ENCODE measurements at regions of chr11 and their contacts with region 1.

Region 1: DNA sequence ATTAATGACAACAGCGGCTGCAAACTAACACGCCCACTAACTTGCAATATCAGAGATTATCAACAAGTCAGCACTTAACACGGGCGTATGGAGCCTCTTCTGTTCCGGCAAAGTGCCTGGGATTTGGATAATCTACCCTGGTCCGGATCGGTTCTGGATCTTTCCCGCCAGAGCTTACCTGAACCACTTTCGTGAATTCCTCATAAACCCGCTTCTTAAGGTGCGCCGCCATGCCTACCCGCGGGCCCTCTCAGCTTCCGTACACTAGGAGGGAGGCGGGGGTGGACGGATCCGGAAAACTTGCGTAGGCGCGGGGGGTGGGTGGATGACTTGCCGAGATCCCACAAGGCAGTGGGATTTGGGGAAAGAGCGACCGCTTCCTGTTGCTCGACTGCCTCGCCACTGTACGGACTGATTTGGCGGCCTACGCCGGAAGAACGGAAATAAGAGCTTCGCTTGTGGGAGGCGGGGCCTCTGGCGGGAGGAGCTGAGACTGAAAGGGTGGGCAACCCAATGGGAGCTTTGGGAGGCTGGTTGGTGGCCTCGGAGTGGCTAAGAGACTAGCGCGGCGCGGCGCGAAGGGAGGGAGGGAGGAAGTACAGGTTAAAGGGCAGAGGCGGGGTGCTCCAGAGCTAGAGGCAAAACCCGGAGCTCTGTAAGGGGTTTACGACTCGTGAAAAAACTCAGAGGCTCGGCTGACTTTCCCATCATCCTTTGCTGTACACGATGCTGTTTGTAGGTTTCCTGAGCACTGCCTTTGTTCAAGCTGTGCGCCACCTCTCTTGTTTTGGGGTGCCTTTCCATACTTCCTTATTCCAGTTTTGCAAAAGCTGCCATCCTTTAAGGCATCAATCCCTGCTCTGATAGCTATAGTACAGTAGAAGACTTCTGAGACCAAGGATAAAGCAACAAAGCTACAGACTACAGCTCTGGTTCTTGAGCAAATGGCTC is at the start of gene INTS4:
- DNase-seq: peak; percentile 98 to 100 (median 99)
- H3K4me3 ChIP-seq: peak within 1 kb of the TSS; percentile 50 to 96 (median 82)
- H3K27ac ChIP-seq: peak within 1 kb of the TSS; percentile 78 to 99 (median 94)
- H3K27me3 ChIP-seq: no peaks in the 10 kb centered on the region
- CTCF ChIP-seq: peak in 42 of 56 donors; percentile 6 to 65 (median 32)
- total RNA-seq, gene INTS4: 21.1 to 52.1 (median 34.9) TPM

Region 2: GRCh38 chr11:77637345-77638165 is 357.1 kb before region 1 on chr11 and contains the start of gene CLNS1A:
- intact Hi-C with region 1: loop called in 1 of 2 experiments (anchors 5 kb)
- DNase-seq: peak; percentile 89 to 95 (median 94)
- H3K4me3 ChIP-seq: peak within 1 kb of the TSS; percentile 61 to 100 (median 93)
- H3K27ac ChIP-seq: peak within 1 kb of the TSS in 57 of 59 donors; percentile 38 to 94 (median 82)
- H3K27me3 ChIP-seq: no peaks in the 10 kb centered on the region
- CTCF ChIP-seq: peak in 31 of 56 donors; percentile 5 to 54 (median 28)
- total RNA-seq, gene CLNS1A: 82.2 to 173 (median 107) TPM

Region 3: DNA sequence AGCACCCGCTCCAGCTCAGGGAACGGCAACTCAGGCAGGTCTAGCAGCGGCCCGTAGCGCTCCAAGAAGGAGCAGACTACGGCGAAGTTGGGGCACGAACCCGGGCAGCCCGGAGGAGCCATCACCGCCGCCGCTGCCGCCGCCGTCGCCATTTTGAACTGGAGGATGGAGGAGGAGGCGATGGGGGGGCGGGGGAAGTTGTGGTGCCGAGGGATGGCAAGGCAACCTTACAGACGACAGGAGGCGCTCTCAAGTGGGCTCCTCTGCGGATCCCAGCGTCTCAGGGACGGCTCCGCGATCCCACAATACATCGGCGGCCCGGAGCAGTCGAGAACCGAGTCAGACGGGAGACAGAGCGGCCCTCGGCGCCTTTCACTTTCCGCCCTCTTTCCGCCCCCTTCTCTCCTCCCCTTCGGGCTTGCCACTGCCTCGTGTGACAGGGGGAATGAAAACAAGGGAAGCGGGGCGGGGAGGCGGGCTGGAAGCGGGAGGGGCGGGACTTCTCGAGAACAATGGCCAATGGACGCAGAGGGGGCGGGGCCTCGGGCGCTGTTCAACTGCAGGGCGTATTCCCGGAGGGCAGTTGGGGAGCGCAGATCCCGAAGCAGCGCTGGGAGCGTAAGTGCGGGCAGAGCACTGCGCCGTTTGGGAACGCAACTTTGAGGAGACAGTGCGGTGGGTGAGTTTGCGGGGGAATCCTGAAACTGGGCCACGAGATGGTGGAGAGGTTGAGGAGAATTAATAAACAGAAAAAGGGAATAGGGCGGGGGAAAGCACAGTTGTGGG is 173.9 kb before region 1 on chr11 and contains the starts of genes AAMDC and RSF1:
- intact Hi-C with region 1: loop called (anchors 1 kb)
- DNase-seq: peak; percentile 96 to 99 (median 99)
- H3K4me3 ChIP-seq: peak within 1 kb of the TSS; percentile 73 to 100 (median 96)
- H3K27ac ChIP-seq: peak within 1 kb of the TSS; percentile 89 to 99 (median 98)
- H3K27me3 ChIP-seq: no peaks in the 10 kb centered on the region
- CTCF ChIP-seq: peak in 55 of 56 donors; percentile 57 to 92 (median 76)
- total RNA-seq, gene AAMDC: 5.4 to 28.0 (median 14.8) TPM
- total RNA-seq, gene RSF1: 75.5 to 116 (median 94.3) TPM

Region 4: DNA sequence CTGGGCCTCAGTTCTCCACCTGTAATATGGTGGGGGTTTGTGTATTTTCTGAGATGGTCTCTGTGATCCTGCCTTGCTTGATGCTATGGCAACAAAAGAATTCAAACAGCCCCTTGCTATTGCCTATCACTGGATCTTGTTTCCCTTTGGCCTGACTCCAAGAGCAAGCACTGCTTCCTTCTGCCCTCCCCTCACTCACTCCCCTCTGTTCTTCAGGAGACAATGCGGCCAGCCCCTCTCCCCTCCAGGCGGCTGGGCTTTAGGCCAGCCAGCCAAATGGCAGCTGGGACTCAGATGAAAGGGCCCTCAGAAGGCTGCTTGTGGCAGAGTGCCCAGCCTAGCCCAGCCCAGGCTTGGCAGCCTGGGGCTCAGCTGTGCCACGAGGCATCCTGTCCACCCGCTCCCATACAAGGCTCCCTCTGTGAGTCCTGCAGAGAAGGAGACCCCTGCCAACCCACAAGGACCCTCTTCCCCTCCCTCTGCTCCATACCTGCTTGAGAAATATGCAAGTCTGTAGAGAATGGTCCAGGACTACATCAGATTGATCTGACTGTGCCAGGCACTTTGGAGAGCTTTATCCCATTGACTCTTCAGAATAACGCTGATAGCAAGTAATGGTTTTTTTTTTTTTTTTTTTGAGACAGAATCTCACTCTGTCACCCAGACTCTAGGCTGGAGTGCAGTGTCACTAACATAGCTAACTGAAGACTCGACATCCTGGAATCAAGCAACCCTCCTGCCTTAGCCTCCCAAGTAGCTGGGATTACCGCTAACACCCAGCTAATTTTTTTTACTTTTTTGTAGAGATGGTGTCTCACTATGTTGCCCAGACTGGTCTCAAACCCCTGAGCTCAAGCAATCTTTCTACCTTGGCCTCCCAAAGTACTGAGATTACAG is 36.0 kb after region 1 on chr11:
- intact Hi-C with region 1: loop called (anchors 2 to 5 kb)
- DNase-seq: peak; percentile 85 to 93 (median 91)
- H3K4me3 ChIP-seq: peak overlapping the region in 20 of 59 donors; percentile 0 to 43 (median 12)
- H3K27ac ChIP-seq: peak overlapping the region in 55 of 59 donors; percentile 6 to 90 (median 76)
- H3K27me3 ChIP-seq: no peaks in the 10 kb centered on the region
- CTCF ChIP-seq: peak in 19 of 56 donors; percentile 7 to 47 (median 21)

Region 5: DNA sequence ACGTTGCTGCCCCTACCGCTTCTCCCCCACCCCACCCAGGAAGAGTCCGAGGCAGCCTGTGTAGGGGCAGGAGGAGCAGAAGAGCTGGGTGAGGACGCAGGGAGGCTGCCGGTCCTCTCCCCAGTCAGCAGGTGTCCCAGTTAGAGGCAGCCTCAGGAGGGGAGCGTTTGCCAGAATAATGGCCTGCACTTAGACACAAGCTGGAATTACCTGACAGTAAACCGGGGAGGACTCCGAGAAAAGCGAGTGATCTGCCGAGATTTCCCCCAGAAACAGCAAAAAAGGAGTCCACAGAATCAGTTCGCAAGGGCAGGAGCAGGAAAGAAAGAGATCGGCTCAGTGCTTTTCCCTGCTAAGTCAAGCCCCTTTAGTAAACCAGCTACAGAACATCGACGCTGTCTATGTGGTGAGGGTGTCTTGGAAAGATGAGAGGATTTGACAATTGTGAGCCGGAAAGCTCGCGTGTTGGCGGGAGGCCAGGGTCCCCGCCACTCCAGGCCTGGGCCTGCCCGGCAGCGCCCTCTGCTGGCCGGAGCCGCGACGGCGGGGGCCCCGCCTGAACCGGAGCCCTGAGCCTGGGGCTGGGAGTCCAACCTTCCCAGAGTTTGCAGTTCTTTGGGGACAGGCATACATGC is 51.3 kb after region 1 on chr11:
- intact Hi-C with region 1: loop called (anchors 1 to 2 kb)
- DNase-seq: peak; percentile 75 to 92 (median 82)
- H3K4me3 ChIP-seq: peak overlapping the region; percentile 33 to 79 (median 67)
- H3K27ac ChIP-seq: peak overlapping the region in 58 of 59 donors; percentile 33 to 92 (median 84)
- H3K27me3 ChIP-seq: no peaks in the 10 kb centered on the region
- CTCF ChIP-seq: peak; percentile 82 to 100 (median 98)

Region 6: GRCh38 chr11:78139422-78140391 is 145.0 kb after region 1 on chr11 and contains the start of gene ALG8:
- intact Hi-C with region 1: loop called in 1 of 2 experiments (anchors 5 kb)
- DNase-seq: peak; percentile 87 to 96 (median 91)
- H3K4me3 ChIP-seq: peak within 1 kb of the TSS; percentile 50 to 99 (median 86)
- H3K27ac ChIP-seq: peak within 1 kb of the TSS in 51 of 59 donors; percentile 12 to 91 (median 67)
- H3K27me3 ChIP-seq: no peaks in the 10 kb centered on the region
- CTCF ChIP-seq: peak in 38 of 56 donors; percentile 9 to 66 (median 30)
- total RNA-seq, gene ALG8: 22.3 to 55.7 (median 33.7) TPM